Naive thymus-derived CD4-positive, alpha-beta T cell (primary cell): ENCODE measurements at regions of chr16 and their contacts with region 1.

Region 1: GRCh38 chr16:57045694-57046381 is 46.5 kb upstream of the CPNE2 start:
- DNase-seq: peak in 2 of 9 donors; percentile 26 to 47
- ATAC-seq: peak; percentile 29
- H3K4me3 ChIP-seq: no peak overlapping the region
- H3K4me3 Mint-ChIP-seq: peak overlapping the region in 6 of 10 donors; percentile 9 to 52 (median 32)
- H3K27ac ChIP-seq: peak overlapping the region; percentile 46
- H3K27ac Mint-ChIP-seq: peak overlapping the region; percentile 60 to 97 (median 89)
- H3K4me1 ChIP-seq: peaks cover 30 to 38% of the 10 kb centered on the region in 2 donors
- H3K4me1 Mint-ChIP-seq: peaks cover 24 to 57% (median 41%) of the 10 kb centered on the region in 7 donors
- H3K27me3 ChIP-seq: no peaks in the 10 kb centered on the region
- H3K27me3 Mint-ChIP-seq: no peaks in the 10 kb centered on the region

Region 2: GRCh38 chr16:56964243-56965148 is 81.3 kb before region 1 on chr16:
- CTCF ChIA-PET with region 1: interaction called, 44 read pairs
- POLR2A ChIA-PET with region 1: interaction called, 16 read pairs
- intact Hi-C with region 1: loop called (anchors 1 kb)
- DNase-seq: peak; percentile 84 to 96 (median 91)
- ATAC-seq: peak; percentile 99
- H3K4me3 ChIP-seq: no peak overlapping the region
- H3K4me3 Mint-ChIP-seq: peak overlapping the region in 4 of 10 donors; percentile 6 to 62 (median 38)
- H3K27ac ChIP-seq: no peak overlapping the region
- H3K27ac Mint-ChIP-seq: peak overlapping the region in 8 of 9 donors; percentile 60 to 91 (median 82)
- H3K4me1 ChIP-seq: peaks cover 7 to 19% of the 10 kb centered on the region in 2 donors
- H3K4me1 Mint-ChIP-seq: peaks cover 21 to 27% (median 23%) of the 10 kb centered on the region in 7 donors
- H3K27me3 ChIP-seq: no peaks in the 10 kb centered on the region
- H3K27me3 Mint-ChIP-seq: peaks cover 0 to 4% (median 0%) of the 10 kb centered on the region in 5 donors

Region 3: GRCh38 chr16:57013229-57013628 is 32.6 kb before region 1 on chr16:
- CTCF ChIA-PET with region 1: interaction called, 3 read pairs
- POLR2A ChIA-PET with region 1: interaction called, 40 read pairs
- intact Hi-C with region 1: loop called (anchors 1 kb)
- DNase-seq: no peak
- ATAC-seq: no peak
- H3K4me3 ChIP-seq: peak overlapping the region; percentile 24
- H3K4me3 Mint-ChIP-seq: peak overlapping the region in 9 of 10 donors; percentile 36 to 87 (median 72)
- H3K27ac ChIP-seq: peak overlapping the region; percentile 80
- H3K27ac Mint-ChIP-seq: peak overlapping the region; percentile 88 to 98 (median 94)
- H3K4me1 ChIP-seq: peaks cover 81 to 83% of the 10 kb centered on the region in 2 donors
- H3K4me1 Mint-ChIP-seq: peaks cover 53 to 94% (median 82%) of the 10 kb centered on the region in 7 donors
- H3K27me3 ChIP-seq: no peaks in the 10 kb centered on the region
- H3K27me3 Mint-ChIP-seq: no peaks in the 10 kb centered on the region

Region 4: GRCh38 chr16:57029161-57030160 is 16.4 kb before region 1 on chr16:
- CTCF ChIA-PET with region 1: interaction called, 28 read pairs
- POLR2A ChIA-PET with region 1: interaction called, 172 read pairs
- intact Hi-C with region 1: no loop called
- DNase-seq: no peak
- ATAC-seq: peak; percentile 46
- H3K4me3 ChIP-seq: no peak overlapping the region
- H3K4me3 Mint-ChIP-seq: peak overlapping the region in 1 of 10 donors; percentile 5
- H3K27ac ChIP-seq: peak overlapping the region; percentile 26
- H3K27ac Mint-ChIP-seq: peak overlapping the region in 7 of 9 donors; percentile 27 to 94 (median 81)
- H3K4me1 ChIP-seq: peaks cover 62% of the 10 kb centered on the region in 2 donors
- H3K4me1 Mint-ChIP-seq: peaks cover 53 to 92% (median 77%) of the 10 kb centered on the region in 7 donors
- H3K27me3 ChIP-seq: no peaks in the 10 kb centered on the region
- H3K27me3 Mint-ChIP-seq: no peaks in the 10 kb centered on the region